ENCODE measurements at regions of chr1 and their contacts with region 1.

Region 1: DNA sequence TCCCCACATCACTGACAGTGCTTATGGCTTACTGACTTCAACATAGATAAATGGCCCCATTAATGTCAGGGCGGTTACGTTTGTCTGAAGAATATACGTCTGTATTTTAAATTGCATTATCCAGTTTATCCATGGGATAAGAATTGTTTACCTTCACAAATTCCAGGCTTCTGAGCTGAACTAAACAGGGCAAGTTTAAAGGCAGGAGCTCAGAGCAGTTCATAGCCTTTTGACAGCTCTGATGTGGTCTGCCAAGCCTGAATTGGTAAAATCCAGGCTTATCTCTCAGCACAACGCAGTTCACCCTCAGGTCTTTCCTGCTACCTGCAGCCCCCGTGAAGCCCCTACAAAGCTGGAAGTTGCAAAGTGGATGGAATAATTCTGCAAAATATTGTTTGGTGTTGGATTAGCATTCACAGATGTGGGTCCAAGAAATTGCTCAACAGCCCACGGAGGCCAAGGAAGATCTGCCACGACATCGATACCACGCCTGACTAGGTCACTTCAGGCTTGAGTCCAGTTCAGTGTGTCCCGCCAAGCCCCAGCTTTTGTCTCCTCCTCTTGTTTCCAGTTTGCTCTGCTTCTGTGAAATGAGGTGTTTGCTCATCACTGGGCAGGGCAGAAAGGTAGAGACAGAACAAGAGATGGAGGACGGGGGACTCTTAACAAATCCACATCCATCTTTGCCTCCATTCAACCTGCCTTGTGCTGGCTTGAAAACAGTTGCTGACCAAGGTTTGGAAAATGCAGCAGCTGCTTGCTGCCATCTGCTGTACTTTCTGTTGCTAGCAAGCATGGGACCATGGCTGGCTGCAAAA is 79.8 kb upstream of the GREM2 start:
- DNase-seq: peak; percentile 13
- ATAC-seq: peak; percentile 80
- H3K4me3 ChIP-seq: no peak overlapping the region
- H3K27ac ChIP-seq: no peak overlapping the region
- H3K4me1 ChIP-seq: no peaks in the 10 kb centered on the region
- H3K27me3 ChIP-seq: no peaks in the 10 kb centered on the region
- CTCF ChIP-seq: peak; percentile 77

Region 2: GRCh38 chr1:240190881-240191401 is 500.8 kb before region 1 on chr1:
- CTCF ChIA-PET with region 1: no interaction called
- POLR2A ChIA-PET with region 1: no interaction called
- in situ Hi-C with region 1: no loop called
- intact Hi-C with region 1: loop called (anchors 2 kb)
- DNase-seq: no peak
- ATAC-seq: no peak
- H3K4me3 ChIP-seq: no peak overlapping the region
- H3K27ac ChIP-seq: no peak overlapping the region
- H3K4me1 ChIP-seq: no peaks in the 10 kb centered on the region
- H3K27me3 ChIP-seq: peaks cover 5% of the 10 kb centered on the region; the same call in 1 of the 2 replicates
- CTCF ChIP-seq: peak; percentile 62

Region 3: DNA sequence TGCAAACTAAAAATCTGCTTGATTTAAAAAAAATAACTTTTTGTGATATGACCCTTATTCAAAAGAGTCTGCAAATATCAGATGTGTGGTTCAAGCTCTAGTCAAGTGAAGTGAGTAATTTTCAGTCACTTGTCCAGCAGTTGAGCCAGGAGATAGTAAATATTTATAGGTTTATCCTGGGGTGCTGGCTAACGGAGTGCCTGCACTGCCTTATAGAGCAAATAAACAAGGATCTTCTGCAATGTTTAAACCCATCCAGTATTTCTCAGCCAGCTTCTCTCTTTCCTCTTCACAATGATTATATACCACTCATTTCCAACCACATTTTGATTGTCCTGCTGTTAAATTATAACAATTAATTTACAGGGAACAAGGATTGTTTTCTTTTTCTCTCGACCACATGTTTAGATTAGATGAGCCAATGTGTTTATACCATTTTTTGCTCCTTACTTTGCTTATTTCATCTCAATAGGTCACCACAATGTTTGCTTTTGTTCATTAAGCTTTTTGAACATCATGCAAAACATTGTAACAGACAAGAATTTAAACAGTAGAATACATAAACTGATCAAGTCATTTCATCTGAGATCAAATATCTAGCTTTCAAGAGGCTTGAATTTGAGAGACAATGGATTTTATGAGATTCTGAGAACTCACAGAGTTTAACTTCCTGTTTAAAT is 19.5 kb before region 1 on chr1:
- CTCF ChIA-PET with region 1: interaction called, 7 read pairs
- POLR2A ChIA-PET with region 1: interaction called, 18 read pairs
- in situ Hi-C with region 1: no loop called
- intact Hi-C with region 1: no loop called
- DNase-seq: no peak
- ATAC-seq: no peak
- H3K4me3 ChIP-seq: no peak overlapping the region
- H3K27ac ChIP-seq: no peak overlapping the region
- H3K4me1 ChIP-seq: no peaks in the 10 kb centered on the region
- H3K27me3 ChIP-seq: no peaks in the 10 kb centered on the region
- CTCF ChIP-seq: no peak

Region 4: DNA sequence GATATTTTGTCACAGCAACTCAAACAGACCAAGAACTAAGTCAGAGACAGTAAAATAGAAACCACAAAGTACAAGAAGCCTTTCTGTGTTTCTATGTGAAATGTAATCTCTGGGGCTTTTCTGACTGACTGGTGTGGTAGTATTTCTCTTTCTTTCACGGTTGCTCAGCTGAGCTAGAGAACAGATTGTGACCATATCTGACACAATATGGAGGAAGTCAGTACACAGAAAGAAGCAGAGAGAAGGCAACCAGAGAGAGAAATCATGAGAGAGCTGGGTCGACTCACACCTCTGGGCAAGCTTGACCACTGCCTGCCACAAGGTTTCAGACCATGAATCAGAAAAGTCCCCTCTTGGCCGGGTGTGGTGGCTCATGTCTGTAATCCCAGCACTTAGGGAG is 129.1 kb after region 1 on chr1:
- CTCF ChIA-PET with region 1: no interaction called
- POLR2A ChIA-PET with region 1: no interaction called
- in situ Hi-C with region 1: no loop called
- intact Hi-C with region 1: no loop called
- DNase-seq: no peak
- ATAC-seq: no peak
- H3K4me3 ChIP-seq: no peak overlapping the region
- H3K27ac ChIP-seq: no peak overlapping the region
- H3K4me1 ChIP-seq: no peaks in the 10 kb centered on the region
- H3K27me3 ChIP-seq: no peaks in the 10 kb centered on the region
- CTCF ChIP-seq: no peak